Dorsolateral prefrontal cortex (tissue), 120 donors: ENCODE measurements at regions of chr15 and their contacts with region 1.

Region 1: GRCh38 chr15:74906446-74907162 is at the start of gene FAM219B:
- DNase-seq: peak; percentile 87 to 97 (median 93)
- H3K4me3 ChIP-seq: peak within 1 kb of the TSS; percentile 65 to 99 (median 95)
- H3K27ac ChIP-seq: peak within 1 kb of the TSS; percentile 63 to 97 (median 93)
- H3K27me3 ChIP-seq: no peaks in the 10 kb centered on the region
- CTCF ChIP-seq: peak in 30 of 56 donors; percentile 5 to 60 (median 28)
- total RNA-seq, gene FAM219B: 76.8 to 142 (median 107) TPM

Region 2: DNA sequence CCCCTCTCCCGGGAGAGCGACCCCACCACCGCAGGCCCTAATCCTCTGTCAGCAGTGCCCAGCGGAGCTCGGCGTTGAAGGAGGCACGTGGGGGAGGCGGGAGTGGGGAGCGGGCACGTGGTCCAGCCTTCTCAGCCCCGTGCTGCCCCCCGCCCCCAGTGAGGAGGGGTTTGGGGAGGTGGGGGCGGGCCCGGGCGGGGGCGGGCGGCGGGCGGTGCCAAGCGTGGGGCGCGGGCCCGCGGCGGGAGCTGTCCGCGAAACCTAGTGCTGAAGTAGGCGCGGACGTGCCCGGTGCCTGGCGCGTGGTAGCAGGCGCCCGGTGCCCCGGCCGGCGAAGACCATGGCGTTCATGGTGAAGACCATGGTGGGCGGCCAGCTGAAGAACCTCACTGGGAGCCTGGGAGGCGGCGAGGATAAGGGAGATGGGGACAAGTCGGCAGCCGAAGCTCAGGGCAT is 80.2 kb before region 1 on chr15 and contains the start of gene CPLX3:
- intact Hi-C with region 1: no loop called
- DNase-seq: no peak
- H3K4me3 ChIP-seq: peak within 1 kb of the TSS in 25 of 59 donors; percentile 1 to 49 (median 22)
- H3K27ac ChIP-seq: no peak within 1 kb of the TSS
- H3K27me3 ChIP-seq: peaks cover 0 to 31% (median 6%) of the 10 kb centered on the region in 45 donors
- CTCF ChIP-seq: peak in 1 of 56 donors; percentile 10
- total RNA-seq, gene CPLX3: 1.1 to 12.4 (median 3.8) TPM in 119 of 120 experiments, not detected in the other

Region 3: DNA sequence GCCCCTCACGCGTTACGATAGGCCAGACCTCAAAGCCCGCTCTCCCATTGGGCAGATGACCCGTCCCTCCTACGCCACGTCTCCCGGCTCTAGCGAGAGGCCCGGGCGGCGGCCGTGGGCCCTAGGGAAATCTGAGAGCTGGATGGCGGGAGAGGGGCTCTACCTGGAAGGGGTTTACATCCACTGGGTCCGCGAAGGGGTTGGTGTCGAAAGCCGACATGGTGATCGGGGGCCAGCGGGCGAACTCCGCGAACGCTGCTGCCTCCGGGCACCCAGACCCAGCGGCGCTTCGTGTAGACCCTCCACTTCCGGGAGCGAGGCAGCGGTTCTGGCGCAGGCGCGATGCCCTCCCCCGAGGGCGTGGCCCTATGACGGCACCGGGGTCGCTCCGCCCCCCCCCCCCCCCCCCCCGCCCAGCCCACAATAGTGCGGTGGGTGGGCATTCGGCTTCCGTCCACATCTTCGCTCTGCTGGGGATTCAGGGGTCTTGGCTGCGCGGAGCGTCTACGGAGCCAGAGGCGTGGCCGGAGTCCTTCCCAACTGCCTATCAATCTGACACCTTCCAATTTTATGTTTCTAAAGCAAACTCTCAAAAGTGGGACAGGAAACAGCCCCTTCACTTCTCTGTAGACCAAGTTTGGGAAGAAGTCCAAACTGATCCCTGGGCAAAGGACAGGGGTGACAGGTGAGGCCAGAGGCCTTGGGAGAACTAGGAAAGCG is 33.4 kb before region 1 on chr15 and contains the start of gene SCAMP2:
- intact Hi-C with region 1: loop called in 1 of 2 experiments (anchors 5 kb)
- DNase-seq: peak; percentile 87 to 97 (median 96)
- H3K4me3 ChIP-seq: peak within 1 kb of the TSS; percentile 67 to 100 (median 87)
- H3K27ac ChIP-seq: peak within 1 kb of the TSS; percentile 26 to 96 (median 88)
- H3K27me3 ChIP-seq: no peaks in the 10 kb centered on the region
- CTCF ChIP-seq: peak in 32 of 56 donors; percentile 6 to 55 (median 24)
- total RNA-seq, gene SCAMP2: 19.5 to 74.6 (median 41.4) TPM